ENCODE measurements at regions of chr15 and their contacts with region 1.

Region 1: GRCh38 chr15:56491110-56491722 is 26.3 kb upstream of the MNS1 start:
- ATAC-seq: peak; percentile 49 to 87 (median 78)
- H3K4me3 ChIP-seq: no peak overlapping the region
- H3K27ac ChIP-seq: no peak overlapping the region
- H3K4me1 ChIP-seq: peaks cover 0 to 5% of the 10 kb centered on the region in 2 donors

Region 2: DNA sequence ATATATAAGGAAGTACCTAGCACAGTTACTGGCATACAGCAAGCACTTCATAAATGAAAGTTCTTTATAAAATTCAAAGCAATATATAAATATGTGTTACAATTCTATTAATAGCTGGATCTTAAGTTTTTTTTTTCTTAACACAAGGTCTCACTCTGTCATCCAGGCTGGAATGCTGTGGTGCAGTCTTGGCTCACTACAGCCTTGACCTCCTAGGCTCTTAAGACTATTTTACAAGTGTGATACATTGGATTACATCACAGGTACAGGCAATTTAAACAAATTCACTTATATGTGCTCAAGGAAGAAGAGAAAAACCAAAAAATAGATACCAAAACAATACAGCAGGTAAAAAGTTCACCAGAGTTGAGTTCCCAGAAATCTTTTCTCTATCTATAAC is 181.5 kb after region 1 on chr15:
- in situ Hi-C with region 1: no loop called
- ATAC-seq: no peak
- H3K4me3 ChIP-seq: no peak overlapping the region
- H3K27ac ChIP-seq: no peak overlapping the region
- H3K4me1 ChIP-seq: no peaks in the 10 kb centered on the region

Region 3: DNA sequence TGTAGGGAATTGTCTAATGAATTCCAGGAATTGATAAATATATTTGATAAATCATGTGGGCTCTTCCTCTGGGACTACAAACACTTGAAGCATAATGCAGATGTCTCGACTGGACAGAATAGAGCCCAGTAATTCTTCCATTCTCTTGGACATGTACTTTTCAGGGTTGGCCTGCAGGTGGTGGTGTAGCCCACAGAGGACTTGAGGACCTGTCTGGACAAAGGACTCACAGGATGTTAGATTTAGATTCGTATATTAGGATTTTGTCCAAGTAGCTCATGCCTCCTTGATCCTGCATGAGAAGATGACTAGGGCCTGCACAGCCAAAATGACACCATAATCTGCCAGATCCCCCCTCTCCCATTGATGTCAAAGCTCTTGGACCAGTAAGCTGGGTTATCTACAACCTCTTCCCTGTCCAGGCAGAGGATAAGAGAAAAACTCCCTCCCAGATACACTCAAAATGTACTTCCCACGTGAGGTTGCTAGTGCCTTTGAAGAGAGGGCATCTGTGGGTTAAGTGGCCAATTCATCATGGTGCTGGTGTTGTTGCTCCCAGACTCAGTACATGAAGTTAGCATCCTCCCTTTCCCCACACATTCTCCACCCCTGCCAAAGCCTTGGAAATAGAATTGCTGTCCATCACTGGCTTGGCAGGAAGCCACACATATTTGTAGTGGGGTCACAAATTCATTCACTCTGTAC is 330.7 kb after region 1 on chr15:
- in situ Hi-C with region 1: loop called in 1 of 9 experiments (anchors 25 kb)
- ATAC-seq: peak; percentile 76 to 97 (median 86)
- H3K4me3 ChIP-seq: no peak overlapping the region
- H3K27ac ChIP-seq: no peak overlapping the region
- H3K4me1 ChIP-seq: peaks cover 22 to 27% of the 10 kb centered on the region in 2 donors

Region 4: GRCh38 chr15:56869573-56869972 is 378.4 kb after region 1 on chr15:
- in situ Hi-C with region 1: loop called in 1 of 9 experiments (anchors 25 kb)
- ATAC-seq: peak in 1 of 8 experiments; percentile 4
- H3K4me3 ChIP-seq: no peak overlapping the region
- H3K27ac ChIP-seq: no peak overlapping the region
- H3K4me1 ChIP-seq: peaks cover 15 to 18% of the 10 kb centered on the region in 2 donors

Region 5: GRCh38 chr15:57146506-57147201 is 655.4 kb after region 1 on chr15:
- in situ Hi-C with region 1: loop called in 1 of 9 experiments (anchors 25 kb)
- ATAC-seq: peak in 4 of 8 experiments; percentile 24 to 89 (median 71)
- H3K4me3 ChIP-seq: no peak overlapping the region
- H3K27ac ChIP-seq: no peak overlapping the region
- H3K4me1 ChIP-seq: peaks cover 6% of the 10 kb centered on the region in 2 donors

Region 6: DNA sequence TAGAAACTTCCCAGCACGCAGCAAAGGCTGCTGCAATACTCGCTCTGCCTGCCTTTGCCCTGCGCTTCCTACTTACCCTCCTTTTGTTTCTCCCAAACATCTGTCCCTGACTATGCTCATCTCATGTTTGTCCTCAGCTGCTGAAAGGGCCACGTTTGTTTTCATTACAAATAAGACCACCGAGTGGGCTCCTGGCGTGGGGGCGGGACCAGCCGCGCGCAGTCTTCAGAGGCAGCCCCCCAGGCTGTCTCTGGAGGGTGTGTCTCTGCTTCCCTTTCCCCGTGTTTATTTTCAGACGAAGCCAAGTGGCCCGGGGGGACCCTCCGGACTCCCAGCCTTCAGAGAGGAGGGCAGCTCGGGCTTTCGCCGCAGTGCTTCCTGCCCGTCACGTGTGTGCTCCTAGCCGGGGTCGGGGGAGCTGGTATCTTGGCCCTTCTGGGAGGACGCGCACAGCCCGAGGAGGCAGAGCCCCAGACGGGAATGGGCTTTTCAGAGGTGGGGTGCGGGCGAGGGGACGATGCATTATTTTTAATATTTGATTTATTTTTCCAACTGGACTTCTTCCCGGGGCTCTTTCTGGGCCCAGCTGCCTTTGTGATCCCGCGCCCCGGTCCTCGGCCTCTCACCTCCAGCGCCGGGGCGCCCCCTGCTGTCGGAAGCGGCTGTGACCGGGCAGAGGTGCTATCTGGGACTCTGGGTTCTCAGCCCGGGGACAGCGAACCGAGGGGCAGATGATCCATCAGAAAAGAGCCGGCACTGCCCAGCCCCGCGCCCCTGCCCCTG is 815.1 kb after region 1 on chr15:
- in situ Hi-C with region 1: loop called in 3 of 9 experiments (anchors 25 kb)
- ATAC-seq: peak; percentile 81 to 96 (median 90)
- H3K4me3 ChIP-seq: peak overlapping the region; percentile 17 to 38 (median 30)
- H3K27ac ChIP-seq: peak overlapping the region in 1 of 2 donors; percentile 44
- H3K4me1 ChIP-seq: peaks cover 0 to 5% of the 10 kb centered on the region in 2 donors

Region 7: GRCh38 chr15:57527382-57528091 is 1036.3 kb after region 1 on chr15:
- in situ Hi-C with region 1: loop called in 4 of 9 experiments (anchors 10 to 25 kb)
- ATAC-seq: peak; percentile 66 to 87 (median 84)
- H3K4me3 ChIP-seq: no peak overlapping the region
- H3K27ac ChIP-seq: no peak overlapping the region
- H3K4me1 ChIP-seq: peaks cover 4 to 11% of the 10 kb centered on the region in 2 donors

Region 8: DNA sequence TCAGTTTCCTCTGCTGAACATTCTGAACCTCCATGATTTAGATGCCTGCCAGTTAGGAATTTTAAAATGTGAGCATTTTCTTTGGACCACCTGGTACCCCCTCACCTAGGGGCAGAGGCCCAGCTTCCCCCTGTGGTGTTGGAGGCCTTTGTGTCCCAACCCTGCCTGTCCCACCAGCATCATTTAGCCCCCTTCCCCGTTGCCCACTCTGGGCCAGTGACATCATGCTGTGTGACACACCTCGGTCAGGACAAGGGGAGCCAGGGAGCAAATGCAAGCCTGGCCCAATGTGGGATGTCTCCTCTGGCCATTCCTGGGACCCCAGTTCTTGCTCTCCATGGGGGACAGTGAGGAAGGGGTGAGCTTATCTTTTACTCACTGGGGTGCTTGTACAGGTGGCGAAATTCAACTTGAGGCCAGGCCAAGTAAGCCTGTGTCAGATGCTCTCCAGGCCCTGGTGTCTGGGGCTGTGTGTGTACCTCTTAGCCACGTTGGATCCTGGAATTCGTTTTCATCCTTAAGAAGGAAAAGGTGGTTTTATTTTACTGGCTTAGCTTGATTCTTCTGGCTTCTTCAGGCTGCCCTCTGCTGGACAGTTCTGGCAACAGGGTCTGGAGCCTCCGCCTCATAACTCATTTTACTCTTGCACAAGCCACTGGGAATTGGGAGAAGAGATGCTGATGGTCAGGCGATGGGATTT is 1050.7 kb after region 1 on chr15:
- in situ Hi-C with region 1: loop called in 4 of 9 experiments (anchors 10 to 25 kb)
- ATAC-seq: peak; percentile 32 to 86 (median 69)
- H3K4me3 ChIP-seq: no peak overlapping the region
- H3K27ac ChIP-seq: no peak overlapping the region
- H3K4me1 ChIP-seq: peaks cover 2 to 18% of the 10 kb centered on the region in 2 donors

Measured in motor neuron (in vitro differentiated cells).